ENCODE measurements at regions of chr5 and their contacts with region 1.

Region 1: DNA sequence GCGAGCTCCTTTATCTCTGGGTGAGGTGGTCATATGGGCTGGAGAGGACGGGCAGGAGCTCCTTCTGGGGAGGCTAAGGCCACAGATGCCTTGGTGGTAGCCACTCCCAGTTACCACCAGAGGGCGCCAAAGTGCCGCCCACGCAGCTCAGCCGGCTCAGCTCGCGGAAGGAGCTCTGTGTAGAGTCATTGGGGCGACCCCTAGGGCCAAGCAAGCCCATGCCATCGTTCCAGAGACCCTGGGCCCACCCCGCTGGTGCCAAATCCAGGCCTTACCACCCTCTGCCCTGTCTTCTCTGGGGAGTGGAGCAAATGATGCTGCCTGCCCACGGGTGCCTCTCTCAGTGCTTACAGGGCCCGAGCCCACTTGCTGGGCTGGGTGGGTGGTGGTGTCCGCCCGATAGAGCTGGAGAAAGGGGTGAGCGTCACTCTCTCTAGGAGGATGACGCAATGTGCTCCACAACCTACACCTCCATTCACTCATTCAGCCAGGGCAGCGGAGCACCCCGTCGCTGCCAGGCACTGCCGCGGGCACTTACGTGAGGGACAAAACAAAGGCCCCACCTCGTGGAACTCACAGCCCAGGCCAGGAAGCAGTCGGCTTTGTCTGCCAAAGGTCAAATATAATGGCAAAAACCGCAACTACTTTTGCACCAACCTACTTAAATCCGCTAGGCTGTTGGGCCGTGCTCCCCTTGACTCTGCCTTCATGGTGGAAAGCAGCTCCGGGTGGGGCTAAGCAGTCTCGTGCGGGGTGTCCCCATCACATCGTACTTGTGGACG is 13.8 kb downstream of the TSPAN17 start:
- DNase-seq: peak; percentile 89
- H3K27ac ChIP-seq: no peak overlapping the region
- CTCF ChIP-seq: peak; percentile 99

Region 2: DNA sequence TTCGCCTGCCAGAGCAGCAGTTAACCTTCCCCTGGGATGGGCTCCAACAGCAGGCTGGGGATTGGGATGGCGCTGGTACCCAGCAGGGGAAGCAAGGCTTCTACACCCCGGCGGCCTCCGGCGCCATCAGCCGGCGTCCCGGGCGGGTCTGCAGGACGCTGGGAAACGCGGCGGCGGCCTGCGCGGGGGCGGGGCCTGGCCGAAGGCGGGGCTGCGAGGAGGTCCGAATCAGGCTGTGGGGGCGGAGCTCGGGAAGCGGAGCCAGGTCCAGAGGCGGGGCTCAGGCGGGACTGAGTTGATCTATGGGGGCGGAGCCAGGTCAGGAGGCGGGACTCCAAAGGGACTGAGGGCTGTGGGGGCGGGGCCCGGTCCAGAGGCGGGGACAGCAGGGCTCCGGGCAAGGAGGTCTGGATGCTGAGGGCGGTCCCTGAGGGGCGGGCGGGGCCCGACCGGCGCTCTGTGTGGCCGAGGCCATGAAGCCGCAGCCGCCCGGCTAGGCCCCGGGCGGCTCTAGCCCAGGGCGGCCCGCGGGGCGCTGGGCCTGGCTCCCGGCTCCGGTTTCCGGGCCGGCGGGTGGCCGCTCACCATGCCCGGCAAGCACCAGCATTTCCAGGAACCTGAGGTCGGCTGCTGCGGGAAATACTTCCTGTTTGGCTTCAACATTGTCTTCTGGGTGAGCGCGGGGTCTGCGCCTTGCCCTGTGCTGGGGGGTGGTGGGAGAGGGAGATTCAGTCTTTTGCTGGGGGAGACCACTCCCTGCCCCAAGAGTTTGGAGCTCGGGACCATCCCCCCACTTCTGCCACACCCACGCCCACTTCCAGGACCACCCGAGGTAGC is 13.8 kb before region 1 on chr5 and contains the start of gene TSPAN17:
- CTCF ChIA-PET with region 1: interaction called, 31 read pairs
- POLR2A ChIA-PET with region 1: interaction called, 3 read pairs
- DNase-seq: peak; percentile 100
- H3K27ac ChIP-seq: peak within 1 kb of the TSS; percentile 72
- CTCF ChIP-seq: no peak; the same call in 1 of the 2 replicates

Region 3: GRCh38 chr5:176899296-176899891 is 238.3 kb after region 1 on chr5 and contains the start of gene HK3:
- CTCF ChIA-PET with region 1: interaction called, 13 read pairs
- POLR2A ChIA-PET with region 1: no interaction called
- DNase-seq: no peak
- H3K27ac ChIP-seq: no peak within 1 kb of the TSS
- CTCF ChIP-seq: no peak

Region 4: DNA sequence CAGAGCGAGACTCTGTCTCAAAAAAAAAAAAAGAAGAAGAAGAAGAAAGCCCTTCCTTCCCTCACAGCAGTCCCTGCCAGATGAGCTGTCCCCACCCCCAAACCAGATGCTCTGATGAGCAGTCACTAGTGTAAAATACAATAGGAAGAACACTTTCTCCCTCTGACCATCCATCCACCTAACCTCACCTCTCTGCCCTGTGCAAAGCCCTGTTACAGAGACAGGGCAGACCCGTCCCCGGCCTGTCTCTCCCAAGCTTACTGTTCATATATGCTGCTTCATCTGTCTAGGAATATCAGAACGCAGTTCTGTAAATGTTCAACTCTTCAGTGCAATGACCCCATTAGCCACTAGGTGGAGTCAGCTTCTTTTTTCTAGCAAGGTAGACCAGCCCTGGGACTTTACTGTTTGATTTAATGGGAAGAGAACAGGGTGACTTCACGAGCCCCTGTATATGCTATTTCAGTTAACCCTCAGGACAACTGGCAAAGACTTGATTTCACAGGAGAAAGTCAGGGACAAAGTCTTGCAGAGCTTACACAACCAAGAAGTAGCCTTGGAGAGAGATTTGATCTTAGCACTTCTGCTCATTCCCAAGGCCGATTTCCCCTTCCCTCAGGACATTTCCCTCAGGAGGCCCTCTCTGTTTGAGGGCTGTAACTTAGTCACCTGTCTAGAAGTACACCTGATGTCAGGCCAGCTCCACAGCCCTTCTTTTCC is 410.8 kb after region 1 on chr5:
- CTCF ChIA-PET with region 1: interaction called, 12 read pairs
- POLR2A ChIA-PET with region 1: no interaction called
- DNase-seq: peak; percentile 71
- H3K27ac ChIP-seq: no peak overlapping the region
- CTCF ChIP-seq: peak; percentile 97